Mammary epithelial cell (primary cell): ENCODE measurements at regions of chr11 and their contacts with region 1.

Region 1: DNA sequence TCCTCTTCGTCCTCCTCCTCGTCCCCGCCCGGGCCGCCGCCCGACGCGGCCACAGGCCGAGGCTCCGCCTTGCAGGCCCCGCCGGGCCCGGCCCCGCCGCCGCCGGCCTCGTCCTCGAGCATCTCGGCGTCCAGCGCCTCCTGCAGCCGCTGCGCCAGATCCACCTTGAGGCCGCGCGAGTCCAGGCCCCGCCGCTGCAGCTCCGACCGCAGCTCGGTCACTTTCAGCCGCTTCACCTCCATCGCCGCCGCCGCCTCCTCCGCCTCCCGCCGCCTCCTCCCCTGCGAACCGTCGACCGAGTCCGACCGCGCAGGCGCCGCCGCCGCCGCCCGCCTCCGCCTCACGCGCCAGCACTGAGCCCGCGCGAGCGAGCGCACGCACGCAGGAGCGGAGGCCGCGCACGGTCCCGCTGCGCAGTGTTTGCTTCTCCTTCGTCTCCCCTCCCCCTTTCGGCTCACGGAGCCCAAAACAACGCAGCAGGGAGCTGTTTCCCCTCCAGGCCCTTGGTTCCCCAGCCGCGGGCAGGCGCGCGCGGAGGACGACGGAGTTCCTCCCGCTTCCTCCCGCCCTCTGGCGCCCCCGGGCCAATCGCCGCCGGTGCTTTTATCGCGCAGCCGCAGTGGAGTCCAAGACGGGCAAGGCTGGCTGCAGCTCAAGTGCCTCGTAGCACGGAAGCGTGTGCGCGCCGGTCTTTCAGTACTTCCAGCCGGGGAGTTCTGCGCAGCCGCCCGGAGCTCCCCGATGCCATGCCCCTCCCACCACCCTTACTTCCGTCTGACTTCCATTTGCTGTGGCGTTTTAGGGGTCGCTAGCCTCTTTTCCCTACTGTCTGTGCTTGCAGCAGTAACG is at the start of gene HNRNPUL2:
- DNase-seq: peak; percentile 99
- H3K4me3 ChIP-seq: peak within 1 kb of the TSS; percentile 89 to 96 (median 90)
- H3K27ac ChIP-seq: peak within 1 kb of the TSS; percentile 82
- H3K4me1 ChIP-seq: peaks cover 4% of the 10 kb centered on the region
- H3K27me3 ChIP-seq: no peaks in the 10 kb centered on the region
- CTCF ChIP-seq: no peak
- total RNA-seq, gene HNRNPUL2: 7.7 to 50.4 TPM

Region 2: GRCh38 chr11:62705880-62706849 is 21.0 kb before region 1 on chr11:
- CTCF ChIA-PET with region 1: no interaction called
- dilution Hi-C with region 1: no loop called
- in situ Hi-C with region 1: no loop called
- intact Hi-C with region 1: loop called (anchors 2 kb)
- DNase-seq: peak; percentile 91
- H3K4me3 ChIP-seq: peak overlapping the region; percentile 70 to 89 (median 85)
- H3K27ac ChIP-seq: peak overlapping the region; percentile 98
- H3K4me1 ChIP-seq: peaks cover 31% of the 10 kb centered on the region
- H3K27me3 ChIP-seq: no peaks in the 10 kb centered on the region
- CTCF ChIP-seq: no peak

Region 3: DNA sequence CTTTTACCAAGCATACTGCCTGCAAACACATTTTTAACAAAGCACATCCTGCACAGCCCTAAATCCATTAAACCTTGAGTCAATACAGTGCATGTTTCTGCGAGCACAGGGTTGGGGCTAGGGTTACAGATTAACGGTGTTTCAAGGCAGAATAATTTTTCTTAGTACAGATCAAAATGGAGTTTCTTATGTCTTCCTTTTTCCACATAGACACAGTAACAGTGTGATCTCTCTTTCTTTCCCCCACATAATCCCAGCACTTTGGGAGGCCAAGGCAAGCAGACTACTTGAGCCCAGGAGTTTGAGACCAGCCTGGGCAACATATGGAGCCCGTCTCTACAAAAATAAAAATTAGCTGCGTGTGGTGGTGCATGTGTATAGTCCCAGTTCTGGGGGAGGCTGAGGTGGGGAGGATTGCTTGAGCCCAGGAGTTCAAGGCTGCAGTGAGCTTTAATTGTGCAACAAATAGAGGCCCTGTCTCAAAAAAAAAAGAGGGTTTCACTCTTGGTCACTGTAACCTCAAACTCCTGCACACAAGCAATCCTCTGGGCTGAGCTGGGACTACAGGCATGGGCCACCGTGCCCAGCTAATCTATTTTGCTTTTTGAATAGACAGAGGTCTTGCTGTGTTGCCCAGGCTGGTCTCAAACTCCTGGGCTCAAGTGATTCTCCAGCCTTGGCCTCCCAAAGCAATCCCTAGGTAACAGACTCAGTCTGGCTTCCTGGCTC is 133.9 kb after region 1 on chr11:
- CTCF ChIA-PET with region 1: no interaction called
- dilution Hi-C with region 1: no loop called
- in situ Hi-C with region 1: no loop called
- intact Hi-C with region 1: loop called (anchors 2 kb)
- DNase-seq: no peak
- H3K4me3 ChIP-seq: no peak overlapping the region
- H3K27ac ChIP-seq: no peak overlapping the region
- H3K4me1 ChIP-seq: peaks cover 7% of the 10 kb centered on the region
- H3K27me3 ChIP-seq: no peaks in the 10 kb centered on the region
- CTCF ChIP-seq: no peak